ENCODE measurements at regions of chr7 and their contacts with region 1.

Region 1: GRCh38 chr7:106461993-106462859 is 177.4 kb upstream of the NAMPT start:
- DNase-seq: peak in 3 of 14 experiments; percentile 28 to 51 (median 43)
- ATAC-seq: no peak
- H3K4me3 ChIP-seq: no peak overlapping the region
- H3K4me3 Mint-ChIP-seq: no peak overlapping the region
- H3K27ac ChIP-seq: no peak overlapping the region
- H3K27ac Mint-ChIP-seq: no peak overlapping the region
- H3K4me1 ChIP-seq: no peaks in the 10 kb centered on the region
- H3K4me1 Mint-ChIP-seq: no peaks in the 10 kb centered on the region
- H3K27me3 ChIP-seq: no peaks in the 10 kb centered on the region
- H3K27me3 Mint-ChIP-seq: no peaks in the 10 kb centered on the region
- CTCF ChIP-seq: peak; percentile 62

Region 2: GRCh38 chr7:106176414-106177299 is 285.6 kb before region 1 on chr7:
- CTCF ChIA-PET with region 1: interaction called, 81 read pairs
- POLR2A ChIA-PET with region 1: interaction called, 12 read pairs
- intact Hi-C with region 1: loop called (anchors 1 kb)
- DNase-seq: peak; percentile 37 to 79 (median 61)
- ATAC-seq: peak; percentile 82
- H3K4me3 ChIP-seq: no peak overlapping the region
- H3K4me3 Mint-ChIP-seq: no peak overlapping the region
- H3K27ac ChIP-seq: no peak overlapping the region
- H3K27ac Mint-ChIP-seq: no peak overlapping the region
- H3K4me1 ChIP-seq: peaks cover 6% of the 10 kb centered on the region
- H3K4me1 Mint-ChIP-seq: peaks cover 5% of the 10 kb centered on the region
- H3K27me3 ChIP-seq: peaks cover 0 to 4% of the 10 kb centered on the region in 2 experiments
- H3K27me3 Mint-ChIP-seq: peaks cover 19% of the 10 kb centered on the region
- CTCF ChIP-seq: peak; percentile 95

Region 3: GRCh38 chr7:106731187-106731586 is 269.0 kb after region 1 on chr7:
- CTCF ChIA-PET with region 1: no interaction called
- POLR2A ChIA-PET with region 1: no interaction called
- intact Hi-C with region 1: no loop called
- DNase-seq: peak in 2 of 14 experiments; percentile 27 to 38
- ATAC-seq: no peak
- H3K4me3 ChIP-seq: no peak overlapping the region
- H3K4me3 Mint-ChIP-seq: no peak overlapping the region
- H3K27ac ChIP-seq: no peak overlapping the region
- H3K27ac Mint-ChIP-seq: no peak overlapping the region
- H3K4me1 ChIP-seq: peaks cover 5% of the 10 kb centered on the region
- H3K4me1 Mint-ChIP-seq: peaks cover 27% of the 10 kb centered on the region
- H3K27me3 ChIP-seq: no peaks in the 10 kb centered on the region
- H3K27me3 Mint-ChIP-seq: no peaks in the 10 kb centered on the region
- CTCF ChIP-seq: no peak

Measured in CD4-positive, alpha-beta T cell (primary cell).